ENCODE measurements at regions of chr11 and their contacts with region 1.

Region 1: DNA sequence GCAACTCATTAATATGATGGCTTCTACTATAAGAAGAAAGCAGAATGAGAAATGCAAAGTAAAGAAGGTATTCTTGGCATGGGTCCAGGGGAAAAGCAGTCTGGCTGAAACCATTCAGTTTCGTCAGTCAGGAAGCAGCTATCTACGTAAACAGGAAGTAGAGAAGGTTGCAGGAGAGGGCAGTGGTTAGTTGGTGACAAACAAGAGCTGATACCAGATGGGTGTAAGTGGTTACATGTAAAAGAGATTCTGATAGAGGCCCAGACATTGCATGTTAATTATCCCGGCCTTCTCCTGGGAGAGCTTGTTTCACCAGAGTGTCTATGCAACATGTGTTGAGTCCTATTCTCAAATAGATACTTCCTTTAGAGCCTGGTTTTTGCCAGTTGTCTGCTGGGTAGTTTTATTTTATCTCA is 58.4 kb upstream of the PSMA1 start:
- DNase-seq: peak; percentile 46 to 93 (median 83)
- H3K4me3 ChIP-seq: peak overlapping the region; percentile 14
- H3K4me3 Mint-ChIP-seq: peak overlapping the region; percentile 6 to 80 (median 58)
- H3K27ac ChIP-seq: peak overlapping the region; percentile 62
- H3K27ac Mint-ChIP-seq: peak overlapping the region; percentile 79 to 99 (median 98)
- H3K4me1 ChIP-seq: peaks cover 44% of the 10 kb centered on the region
- H3K4me1 Mint-ChIP-seq: peaks cover 60 to 83% (median 67%) of the 10 kb centered on the region in 3 donors
- H3K27me3 ChIP-seq: no peaks in the 10 kb centered on the region
- H3K27me3 Mint-ChIP-seq: no peaks in the 10 kb centered on the region

Region 2: DNA sequence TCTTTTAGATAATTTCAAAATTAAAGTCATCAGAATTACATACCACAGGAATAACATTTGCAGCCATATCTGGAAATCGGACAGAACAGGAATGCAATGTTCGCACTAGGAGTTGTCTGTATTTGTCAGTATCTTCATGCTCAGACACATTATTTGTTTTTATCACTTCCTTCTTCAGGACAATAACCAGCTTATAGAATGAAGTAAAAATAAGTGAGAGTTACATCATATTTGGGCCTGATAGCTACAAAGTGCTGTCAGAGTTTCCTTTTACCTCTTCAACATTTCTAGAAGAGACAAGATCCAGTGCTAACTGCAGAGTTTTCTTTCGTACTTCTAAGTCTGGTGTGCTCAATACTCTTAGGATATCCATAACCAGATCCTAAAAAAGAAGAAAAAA is 97.8 kb before region 1 on chr11:
- CTCF ChIA-PET with region 1: no interaction called
- POLR2A ChIA-PET with region 1: interaction called, 13 read pairs
- DNase-seq: no peak
- H3K4me3 ChIP-seq: no peak overlapping the region
- H3K4me3 Mint-ChIP-seq: no peak overlapping the region
- H3K27ac ChIP-seq: no peak overlapping the region
- H3K27ac Mint-ChIP-seq: no peak overlapping the region
- H3K4me1 ChIP-seq: no peaks in the 10 kb centered on the region
- H3K4me1 Mint-ChIP-seq: peaks cover 10 to 25% (median 25%) of the 10 kb centered on the region in 3 donors
- H3K27me3 ChIP-seq: no peaks in the 10 kb centered on the region
- H3K27me3 Mint-ChIP-seq: no peaks in the 10 kb centered on the region

Region 3: DNA sequence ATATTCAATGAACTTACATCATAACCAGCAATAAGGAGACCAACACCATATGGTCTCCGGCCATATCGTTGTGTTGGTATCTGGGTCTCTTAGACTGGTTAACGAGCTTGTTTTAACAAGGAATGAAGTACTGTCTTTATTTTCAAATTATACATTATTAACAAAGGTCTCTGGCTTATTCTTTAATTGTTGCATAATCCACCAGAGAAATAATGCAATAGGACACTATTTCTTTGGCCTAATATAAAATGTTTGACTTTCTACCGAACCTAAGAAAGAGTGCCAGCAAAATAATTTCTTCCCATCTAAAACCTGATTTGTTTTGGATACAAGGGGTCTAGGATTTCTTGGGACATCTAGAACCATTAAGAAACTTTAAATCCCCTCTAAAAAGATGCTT is 64.7 kb before region 1 on chr11:
- CTCF ChIA-PET with region 1: no interaction called
- POLR2A ChIA-PET with region 1: no interaction called
- DNase-seq: no peak
- H3K4me3 ChIP-seq: no peak overlapping the region
- H3K4me3 Mint-ChIP-seq: no peak overlapping the region
- H3K27ac ChIP-seq: no peak overlapping the region
- H3K27ac Mint-ChIP-seq: no peak overlapping the region
- H3K4me1 ChIP-seq: peaks cover 10% of the 10 kb centered on the region
- H3K4me1 Mint-ChIP-seq: peaks cover 18 to 34% (median 25%) of the 10 kb centered on the region in 3 donors
- H3K27me3 ChIP-seq: no peaks in the 10 kb centered on the region
- H3K27me3 Mint-ChIP-seq: no peaks in the 10 kb centered on the region

Region 4: DNA sequence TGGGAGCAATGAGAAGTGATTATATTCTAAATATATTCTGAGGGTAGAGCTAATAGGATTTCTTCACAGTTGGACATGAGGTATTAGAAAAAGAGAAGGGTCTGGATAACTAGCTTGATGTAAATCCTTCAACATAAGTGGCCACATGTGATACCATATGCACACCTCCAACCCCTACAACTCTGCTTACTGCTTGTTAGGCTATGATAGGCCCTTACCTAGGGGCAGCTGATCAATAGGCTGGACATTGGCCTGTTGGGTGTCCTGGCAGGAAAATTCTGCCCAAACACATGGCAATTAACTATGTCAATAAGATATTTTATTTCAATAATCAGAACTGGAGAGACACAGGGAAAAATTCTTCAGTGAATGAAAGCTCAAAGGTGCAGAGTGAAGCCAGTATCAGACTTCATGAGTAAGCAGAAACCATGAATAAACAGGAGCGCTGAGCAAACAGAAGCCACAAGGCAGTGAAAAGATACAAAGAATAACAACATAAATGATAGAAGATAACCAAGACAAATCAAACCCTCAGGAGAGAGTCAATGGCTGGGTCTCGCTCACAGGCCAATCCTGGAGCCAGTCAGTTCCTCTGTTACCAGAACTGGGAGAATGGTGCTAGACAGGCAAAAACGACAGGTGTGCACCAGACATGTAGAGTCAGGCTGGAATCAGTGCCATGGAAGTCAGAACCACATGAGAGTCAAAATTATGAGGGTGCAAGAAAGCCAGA is 12.1 kb before region 1 on chr11:
- CTCF ChIA-PET with region 1: interaction called, 16 read pairs
- POLR2A ChIA-PET with region 1: interaction called, 12 read pairs
- DNase-seq: no peak
- H3K4me3 ChIP-seq: no peak overlapping the region
- H3K4me3 Mint-ChIP-seq: peak overlapping the region in 2 of 7 donors; percentile 23 to 37
- H3K27ac ChIP-seq: no peak overlapping the region
- H3K27ac Mint-ChIP-seq: peak overlapping the region in 3 of 8 donors; percentile 11 to 82 (median 62)
- H3K4me1 ChIP-seq: peaks cover 22% of the 10 kb centered on the region
- H3K4me1 Mint-ChIP-seq: peaks cover 40 to 75% (median 71%) of the 10 kb centered on the region in 3 donors
- H3K27me3 ChIP-seq: no peaks in the 10 kb centered on the region
- H3K27me3 Mint-ChIP-seq: no peaks in the 10 kb centered on the region

Region 5: DNA sequence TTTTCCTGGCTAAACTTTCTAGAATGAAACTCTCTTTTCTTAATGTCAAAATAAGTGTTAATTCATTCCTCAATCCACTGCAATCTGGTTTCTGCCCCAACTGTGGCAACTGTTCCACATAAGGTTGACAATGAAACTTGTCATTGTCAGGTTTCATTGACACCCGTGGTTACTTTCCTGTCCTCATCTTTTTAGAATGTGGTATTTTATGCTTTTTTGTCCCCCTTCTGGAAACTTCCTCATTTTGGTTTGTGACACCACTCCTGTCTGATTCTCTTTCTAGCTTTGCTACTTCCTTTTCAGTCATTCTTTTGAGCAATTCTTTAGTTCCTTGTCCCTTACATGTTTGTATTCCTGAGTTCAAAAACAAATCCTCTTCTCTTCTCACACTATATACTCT is 57.6 kb after region 1 on chr11:
- CTCF ChIA-PET with region 1: interaction called, 5 read pairs
- POLR2A ChIA-PET with region 1: interaction called, 10 read pairs
- DNase-seq: peak in 2 of 5 donors; percentile 30 to 31
- H3K4me3 ChIP-seq: no peak overlapping the region
- H3K4me3 Mint-ChIP-seq: peak overlapping the region; percentile 12 to 46 (median 20)
- H3K27ac ChIP-seq: no peak overlapping the region
- H3K27ac Mint-ChIP-seq: peak overlapping the region; percentile 1 to 83 (median 62)
- H3K4me1 ChIP-seq: peaks cover 53% of the 10 kb centered on the region
- H3K4me1 Mint-ChIP-seq: peaks cover 62 to 74% (median 71%) of the 10 kb centered on the region in 3 donors
- H3K27me3 ChIP-seq: no peaks in the 10 kb centered on the region
- H3K27me3 Mint-ChIP-seq: no peaks in the 10 kb centered on the region

Measured in CD8-positive, alpha-beta memory T cell (primary cell).